SK-N-SH (cell line): ENCODE measurements at regions of chr14 and their contacts with region 1.

Region 1: GRCh38 chr14:68843471-68844209 is 50.8 kb upstream of the ZFP36L1 start:
- DNase-seq: peak; percentile 77
- H3K4me3 ChIP-seq: peak overlapping the region in 1 of 2 experiments; percentile 23; a peak in 2 of 4 replicates
- H3K27ac ChIP-seq: no peak overlapping the region
- H3K4me1 ChIP-seq: peaks cover 0 to 4% of the 10 kb centered on the region in 2 experiments; a peak in 2 of 4 replicates
- H3K27me3 ChIP-seq: no peaks in the 10 kb centered on the region
- CTCF ChIP-seq: peak; percentile 94
- EP300 ChIP-seq: no peak
- RAD21 ChIP-seq: peak; percentile 71

Region 2: DNA sequence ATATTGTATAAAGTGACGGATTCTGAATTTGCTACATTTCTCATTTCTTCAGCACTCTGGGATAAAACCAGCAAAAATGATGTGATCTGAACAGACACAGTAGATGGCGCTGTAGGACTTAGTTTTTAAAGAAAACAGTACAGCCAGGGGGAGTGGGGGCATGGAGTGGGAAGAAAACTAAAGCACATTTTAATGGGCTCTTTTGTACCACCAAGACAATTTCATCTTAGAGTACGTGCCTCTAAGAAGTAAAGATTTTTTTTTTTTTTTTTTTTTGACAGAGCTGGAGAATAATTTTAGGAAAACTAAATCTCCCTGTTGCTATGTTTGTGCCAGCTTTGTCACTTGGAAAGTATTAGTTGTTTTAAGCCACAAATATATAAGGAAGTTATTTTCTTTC is 899.7 kb before region 1 on chr14:
- CTCF ChIA-PET with region 1: interaction called, 16 read pairs
- POLR2A ChIA-PET with region 1: no interaction called
- DNase-seq: peak; percentile 57
- H3K4me3 ChIP-seq: no peak overlapping the region
- H3K27ac ChIP-seq: peak overlapping the region; percentile 54 to 83; a peak in 3 of 4 replicates
- H3K4me1 ChIP-seq: peaks cover 0 to 28% of the 10 kb centered on the region in 2 experiments; a peak in 3 of 4 replicates
- H3K27me3 ChIP-seq: no peaks in the 10 kb centered on the region
- CTCF ChIP-seq: peak; percentile 82
- EP300 ChIP-seq: peak in 1 of 2 experiments; percentile 42; a peak in 1 of 4 replicates
- RAD21 ChIP-seq: peak; percentile 92

Region 3: GRCh38 chr14:68979021-68979782 is 135.6 kb after region 1 on chr14 and contains the start of gene ACTN1:
- CTCF ChIA-PET with region 1: no interaction called
- POLR2A ChIA-PET with region 1: no interaction called
- DNase-seq: peak; percentile 98
- H3K4me3 ChIP-seq: peak within 1 kb of the TSS; percentile 87 to 96
- H3K27ac ChIP-seq: peak within 1 kb of the TSS; percentile 98
- H3K4me1 ChIP-seq: peaks cover 30 to 37% of the 10 kb centered on the region in 2 experiments
- H3K27me3 ChIP-seq: no peaks in the 10 kb centered on the region
- CTCF ChIP-seq: no peak
- EP300 ChIP-seq: no peak
- RAD21 ChIP-seq: 0 out of 2 replicates have a peak, but pooled peaks have one; percentile 6
- polyA plus RNA-seq, gene ACTN1: 266 and 319 TPM in 2 replicates